ENCODE measurements at regions of chr16 and their contacts with region 1.

Region 1: DNA sequence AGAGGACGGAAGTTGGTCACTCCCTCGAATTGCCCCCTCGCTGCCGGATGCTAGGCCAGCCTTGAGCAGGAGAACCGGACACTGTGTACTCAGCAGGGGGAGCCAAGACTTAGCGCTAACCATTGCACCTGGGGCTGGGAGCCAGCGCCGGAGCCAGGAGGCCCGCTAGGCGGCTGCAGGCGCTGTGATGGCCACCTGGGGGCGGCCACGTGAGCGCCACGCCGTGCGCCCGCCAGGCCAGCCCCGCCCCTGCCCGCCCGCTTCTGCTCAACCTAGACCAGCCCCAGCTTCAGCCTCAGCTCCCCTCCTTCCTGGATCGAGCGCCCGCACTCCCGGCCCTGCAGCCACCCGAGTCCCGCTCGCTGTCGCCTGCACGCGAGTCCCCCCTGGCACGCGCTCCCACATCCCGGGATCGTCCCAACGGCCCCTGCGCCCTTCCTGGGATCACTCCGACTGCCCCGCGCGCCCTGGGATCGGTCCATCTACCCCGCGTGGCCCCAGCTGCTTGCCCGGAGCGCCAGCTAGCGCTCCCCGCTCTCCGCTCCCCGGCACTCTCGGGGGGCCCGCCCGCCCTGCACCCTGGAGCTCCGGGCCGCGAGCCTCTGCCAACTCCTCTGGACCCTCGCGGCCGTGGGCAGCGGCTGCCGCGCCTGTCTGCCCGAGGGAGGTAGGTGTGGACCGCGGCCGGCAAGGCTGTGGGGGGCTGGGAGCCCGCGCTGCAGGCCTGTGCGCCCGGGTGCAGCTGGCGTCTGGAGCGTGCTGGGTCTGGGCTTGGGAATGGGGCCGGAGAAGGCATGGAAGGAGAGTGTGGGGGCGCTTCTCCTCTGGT is at the start of gene EEF2K:
- DNase-seq: peak; percentile 94
- ATAC-seq: peak; percentile 94
- total RNA-seq, gene EEF2K: 28.8 TPM

Region 2: GRCh38 chr16:22225060-22225459 is 18.8 kb after region 1 on chr16:
- intact Hi-C with region 1: loop called (anchors 2 kb)
- DNase-seq: no peak
- ATAC-seq: no peak

Region 3: DNA sequence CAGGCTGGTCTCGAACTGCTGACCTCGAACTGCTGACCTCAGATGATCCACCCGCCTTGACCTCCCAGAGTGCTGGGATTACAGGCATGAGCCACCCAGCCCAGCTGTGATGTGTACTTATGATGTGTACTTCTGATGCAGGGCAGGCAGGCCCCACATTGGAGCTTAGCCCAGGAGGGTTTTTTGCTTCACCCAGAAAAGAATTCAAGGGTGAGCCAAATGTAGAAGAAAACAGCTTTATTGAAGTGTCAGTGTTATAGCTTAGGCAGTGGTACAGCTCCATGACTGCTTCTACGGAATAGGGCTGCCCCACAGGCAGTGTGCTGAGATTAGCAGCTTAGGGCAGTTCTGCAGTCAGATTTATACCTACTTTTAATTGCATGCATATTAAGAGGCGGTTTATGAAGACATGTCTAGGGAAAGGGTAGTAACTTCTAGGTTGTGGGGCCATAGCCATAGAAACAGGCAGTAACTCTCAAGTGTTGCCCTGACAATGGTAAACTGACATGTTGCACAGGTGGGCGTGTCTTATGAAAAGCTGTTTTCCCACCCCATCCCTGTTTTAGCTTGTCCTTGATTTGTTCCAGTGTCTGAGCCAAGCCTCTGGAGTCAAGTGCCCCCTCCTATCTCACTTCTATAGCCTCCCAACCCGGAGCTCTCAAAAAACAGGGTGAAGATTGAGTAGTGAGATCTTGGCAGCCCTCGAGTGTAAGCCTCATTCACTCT is 66.8 kb after region 1 on chr16:
- intact Hi-C with region 1: loop called (anchors 1 kb)
- DNase-seq: no peak
- ATAC-seq: peak; percentile 84

Region 4: GRCh38 chr16:22297114-22297878 is 91.1 kb after region 1 on chr16 and contains the start of gene POLR3E:
- intact Hi-C with region 1: loop called (anchors 1 kb)
- DNase-seq: peak; percentile 100
- ATAC-seq: peak; percentile 97
- total RNA-seq, gene POLR3E: 36.4 TPM